ENCODE measurements at regions of chr3 and their contacts with region 1.

Region 1: GRCh38 chr3:157618075-157618760 is 115.0 kb upstream of the VEPH1 start:
- DNase-seq: no peak
- ATAC-seq: peak; percentile 47

Region 2: GRCh38 chr3:158347966-158348365 is 729.7 kb after region 1 on chr3:
- intact Hi-C with region 1: no loop called
- DNase-seq: no peak
- ATAC-seq: no peak

Region 3: DNA sequence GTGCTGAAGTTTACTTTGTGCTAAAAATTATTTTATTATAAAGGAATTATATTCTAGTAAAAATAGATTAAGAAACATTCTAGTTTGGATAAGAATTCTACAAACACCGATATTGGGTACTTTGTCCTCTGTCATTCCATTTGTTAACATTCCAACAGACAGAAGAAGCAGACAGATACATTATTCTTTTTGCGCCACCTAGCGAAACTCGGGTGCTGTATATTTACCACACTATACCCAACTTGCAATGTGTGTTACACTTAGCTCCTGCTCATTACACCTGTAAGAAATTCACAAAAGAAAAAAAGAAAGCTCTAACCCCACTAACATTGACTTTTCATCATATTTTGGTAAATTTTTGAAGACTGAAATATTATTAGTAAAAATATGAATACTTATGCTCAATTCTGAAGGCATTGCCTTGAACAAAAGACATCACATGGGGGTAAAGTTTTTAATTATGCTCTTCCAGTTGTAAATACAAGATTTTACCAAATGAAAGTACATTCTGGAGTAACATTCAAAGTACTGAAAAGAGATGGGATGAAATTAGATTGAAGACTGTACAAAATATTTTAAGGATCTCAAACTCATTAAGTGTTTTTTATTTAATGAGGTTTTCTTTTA is 816.3 kb after region 1 on chr3:
- intact Hi-C with region 1: loop called (anchors 5 kb)
- DNase-seq: peak; percentile 26
- ATAC-seq: peak; percentile 81

Region 4: DNA sequence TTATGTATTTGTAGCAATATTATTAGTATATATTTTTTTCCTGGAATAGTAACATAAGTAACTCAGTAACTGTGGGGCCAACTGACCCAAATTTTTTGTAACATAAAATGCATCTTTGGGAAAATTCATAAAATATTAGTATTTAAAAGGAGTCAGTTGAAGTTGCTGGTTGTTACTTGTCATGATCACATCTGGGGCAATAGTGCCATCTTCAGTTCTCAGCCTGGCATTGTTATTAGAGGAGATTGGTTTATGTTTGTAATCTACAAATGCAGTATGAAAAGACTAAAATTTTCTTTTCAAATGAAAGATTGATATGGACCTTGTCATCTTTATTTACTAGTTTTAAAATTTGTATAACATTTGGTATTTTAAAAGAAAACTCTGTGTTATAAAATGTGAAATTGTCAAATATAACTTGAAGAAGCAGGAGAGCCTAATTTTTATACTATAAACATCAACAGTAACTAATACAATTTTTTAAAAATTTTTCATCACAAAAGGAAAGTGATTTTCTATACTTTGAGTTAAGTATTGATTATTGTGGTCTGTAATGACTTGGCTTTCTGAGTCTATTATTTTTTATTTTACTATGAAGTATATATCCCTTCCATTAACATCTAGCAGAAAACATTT is 914.0 kb after region 1 on chr3:
- intact Hi-C with region 1: loop called (anchors 5 kb)
- DNase-seq: no peak
- ATAC-seq: no peak